ENCODE measurements at regions of chr17 and their contacts with region 1.

Region 1: DNA sequence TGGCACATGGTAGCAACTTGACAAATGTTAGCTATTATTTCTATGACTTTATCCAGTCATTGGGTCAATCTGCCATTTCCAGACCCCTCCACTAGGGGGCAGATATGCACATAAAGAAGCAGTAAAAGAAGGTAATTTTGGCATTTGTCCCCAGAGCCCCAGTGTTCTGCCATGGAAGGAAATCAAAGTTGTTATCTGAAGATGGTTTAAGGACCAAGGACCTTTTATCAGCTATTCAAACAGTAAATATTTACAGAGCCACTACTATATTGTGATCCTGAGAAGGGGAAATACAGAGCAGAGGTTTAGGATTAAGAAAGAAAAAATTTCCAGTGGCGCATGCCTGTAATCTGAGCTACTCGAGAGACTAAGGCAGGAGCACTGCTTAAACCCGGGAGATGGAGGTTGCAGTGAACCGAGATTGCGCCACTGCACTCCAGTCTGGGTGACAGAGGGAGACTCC is 20.0 kb downstream of the TRAF4 start:
- DNase-seq: peak; percentile 79
- H3K4me3 Mint-ChIP-seq: no peak overlapping the region
- H3K27ac Mint-ChIP-seq: no peak overlapping the region
- H3K4me1 Mint-ChIP-seq: peaks cover 28% of the 10 kb centered on the region
- H3K27me3 Mint-ChIP-seq: no peaks in the 10 kb centered on the region

Region 2: DNA sequence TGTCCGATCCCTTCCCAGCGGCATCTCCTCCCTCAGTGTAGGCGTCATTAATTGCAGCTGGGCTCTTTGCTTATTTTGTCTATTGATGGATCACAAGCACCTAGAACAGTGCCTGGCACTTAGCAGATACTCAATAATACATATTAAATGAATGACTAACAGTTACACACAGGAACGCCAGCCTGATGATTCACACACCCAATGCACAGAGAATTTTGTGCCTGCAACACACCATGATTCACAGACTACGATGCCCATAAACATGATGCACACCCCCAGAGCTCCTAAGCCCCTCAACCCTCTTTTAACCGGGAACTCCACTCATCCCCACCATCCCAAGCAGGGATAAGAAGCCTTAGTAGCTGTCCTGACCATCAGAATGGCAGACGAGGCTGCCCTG is 511.4 kb before region 1 on chr17:
- CTCF ChIA-PET with region 1: no interaction called
- POLR2A ChIA-PET with region 1: no interaction called
- DNase-seq: no peak
- H3K4me3 Mint-ChIP-seq: no peak overlapping the region
- H3K27ac Mint-ChIP-seq: no peak overlapping the region
- H3K4me1 Mint-ChIP-seq: peaks cover 9% of the 10 kb centered on the region
- H3K27me3 Mint-ChIP-seq: peaks cover 2% of the 10 kb centered on the region

Region 3: DNA sequence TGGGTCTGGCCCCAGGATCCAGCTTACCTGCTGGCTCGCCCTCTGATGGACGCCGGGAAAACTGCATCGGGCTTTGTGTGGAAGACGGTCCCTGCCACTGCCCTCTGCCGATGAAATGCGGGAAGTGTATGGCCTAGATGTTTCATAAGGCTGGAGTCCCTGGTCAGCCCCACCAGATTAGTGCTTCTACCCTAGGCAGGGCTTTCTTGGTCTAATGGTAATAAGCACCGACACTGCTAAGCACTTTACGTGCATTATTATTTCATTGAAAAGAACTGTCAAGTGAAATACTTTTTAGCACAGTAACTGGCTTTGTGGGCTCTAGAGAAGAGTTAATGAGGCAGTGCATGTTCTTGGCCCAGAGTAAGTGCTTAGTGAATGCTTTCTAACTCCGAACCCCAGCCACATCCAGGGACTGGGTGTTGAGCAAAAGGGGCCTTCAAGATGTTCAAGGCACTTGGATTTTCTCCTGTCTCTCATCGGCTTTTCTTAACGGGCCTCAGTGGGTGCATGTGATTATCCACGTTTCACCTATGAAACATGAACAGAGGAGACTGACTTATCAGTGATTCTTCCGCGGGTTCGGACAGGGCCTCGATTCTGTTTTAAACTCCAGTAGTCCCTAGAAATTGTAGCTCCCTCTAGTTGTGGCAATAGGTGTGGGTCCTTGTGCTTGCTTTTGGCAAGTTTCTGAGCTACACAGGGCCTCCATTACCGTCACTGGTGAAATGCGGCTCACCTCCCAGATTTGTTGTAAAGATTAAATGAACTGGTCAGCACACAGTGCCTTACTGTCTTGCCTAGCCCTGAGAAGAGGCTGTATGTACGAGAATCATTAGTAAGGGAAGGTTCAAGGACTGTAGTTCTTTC is 13.4 kb before region 1 on chr17:
- CTCF ChIA-PET with region 1: interaction called, 88 read pairs
- POLR2A ChIA-PET with region 1: interaction called, 10 read pairs
- DNase-seq: peak; percentile 91
- H3K4me3 Mint-ChIP-seq: no peak overlapping the region
- H3K27ac Mint-ChIP-seq: no peak overlapping the region
- H3K4me1 Mint-ChIP-seq: peaks cover 35% of the 10 kb centered on the region
- H3K27me3 Mint-ChIP-seq: no peaks in the 10 kb centered on the region

Region 4: DNA sequence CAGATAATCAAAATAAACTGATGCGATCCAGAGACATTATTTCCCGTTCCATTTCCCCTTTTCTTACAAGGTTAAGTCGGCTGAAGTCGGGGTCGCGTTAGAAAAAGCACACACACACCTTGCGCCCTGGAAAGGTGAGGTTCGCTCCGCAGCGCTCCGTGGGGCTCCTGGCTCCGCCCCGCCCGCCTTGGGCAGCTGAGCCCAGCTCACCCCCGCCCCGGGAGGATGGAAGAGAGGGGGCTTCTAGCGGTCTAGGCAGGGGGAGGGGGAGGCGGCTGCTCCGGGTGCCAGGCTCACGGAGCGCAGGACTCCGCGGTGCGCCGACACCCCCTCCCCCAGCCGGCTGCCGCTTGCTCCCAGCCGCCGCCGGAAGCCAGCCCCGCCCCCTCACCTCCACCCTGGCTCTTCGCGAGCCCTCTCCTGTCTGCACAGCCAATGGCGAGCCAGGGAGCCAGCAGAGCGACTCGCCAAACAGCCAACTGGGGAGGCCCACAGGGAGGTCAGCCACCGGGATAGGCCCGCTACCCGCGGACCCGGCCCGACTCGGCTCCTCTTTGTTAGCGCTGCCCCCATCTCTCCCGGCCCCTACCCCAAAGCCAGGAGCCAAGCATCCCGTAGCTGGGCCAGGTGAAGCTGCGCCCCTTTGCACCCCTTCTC is 48.4 kb after region 1 on chr17:
- CTCF ChIA-PET with region 1: interaction called, 31 read pairs
- POLR2A ChIA-PET with region 1: no interaction called
- DNase-seq: peak; percentile 96
- H3K4me3 Mint-ChIP-seq: peak overlapping the region; percentile 73
- H3K27ac Mint-ChIP-seq: peak overlapping the region; percentile 76
- H3K4me1 Mint-ChIP-seq: peaks cover 37% of the 10 kb centered on the region
- H3K27me3 Mint-ChIP-seq: no peaks in the 10 kb centered on the region

Region 5: DNA sequence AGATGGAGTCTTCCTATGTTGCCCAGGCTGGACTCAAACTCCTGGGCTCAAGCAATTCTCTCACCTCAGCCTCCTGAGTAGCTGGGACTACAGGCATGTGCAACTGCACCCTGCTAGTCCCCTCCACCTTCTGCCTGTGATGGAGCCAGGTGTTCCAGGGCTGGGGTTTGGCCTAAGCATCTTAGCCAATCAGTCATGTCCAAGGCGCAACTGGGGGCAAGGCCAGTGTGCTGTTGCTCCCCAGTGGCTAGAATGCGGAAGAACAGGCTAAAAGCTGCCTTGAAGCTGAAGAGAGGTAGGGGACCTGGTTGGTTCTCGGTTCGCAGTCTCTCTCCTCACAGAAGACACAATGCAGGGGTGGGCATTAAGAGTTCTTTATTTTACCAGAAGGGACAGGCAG is 115.1 kb after region 1 on chr17:
- CTCF ChIA-PET with region 1: interaction called, 11 read pairs
- POLR2A ChIA-PET with region 1: no interaction called
- DNase-seq: no peak
- H3K4me3 Mint-ChIP-seq: no peak overlapping the region
- H3K27ac Mint-ChIP-seq: no peak overlapping the region
- H3K4me1 Mint-ChIP-seq: peaks cover 17% of the 10 kb centered on the region
- H3K27me3 Mint-ChIP-seq: no peaks in the 10 kb centered on the region

Region 6: GRCh38 chr17:28908640-28909167 is 144.9 kb after region 1 on chr17:
- CTCF ChIA-PET with region 1: interaction called, 30 read pairs
- POLR2A ChIA-PET with region 1: interaction called, 5 read pairs
- DNase-seq: no peak
- H3K4me3 Mint-ChIP-seq: no peak overlapping the region
- H3K27ac Mint-ChIP-seq: no peak overlapping the region
- H3K4me1 Mint-ChIP-seq: peaks cover 8% of the 10 kb centered on the region
- H3K27me3 Mint-ChIP-seq: no peaks in the 10 kb centered on the region

Measured in activated CD4-positive, alpha-beta memory T cell treated with anti-CD3 and anti-CD28 coated beads, Interleukin-2, amount 10 ng/mL, durations not matched to agents 7 days and 5 days (primary cell).